Motor neuron (in vitro differentiated cells): ENCODE measurements at regions of chr1 and their contacts with region 1.

Region 1: GRCh38 chr1:231357831-231358354 is 19.8 kb downstream of the SPRTN start:
- ATAC-seq: peak; percentile 68 to 90 (median 76)
- H3K4me3 ChIP-seq: no peak overlapping the region
- H3K27ac ChIP-seq: no peak overlapping the region
- H3K4me1 ChIP-seq: no peaks in the 10 kb centered on the region

Region 2: DNA sequence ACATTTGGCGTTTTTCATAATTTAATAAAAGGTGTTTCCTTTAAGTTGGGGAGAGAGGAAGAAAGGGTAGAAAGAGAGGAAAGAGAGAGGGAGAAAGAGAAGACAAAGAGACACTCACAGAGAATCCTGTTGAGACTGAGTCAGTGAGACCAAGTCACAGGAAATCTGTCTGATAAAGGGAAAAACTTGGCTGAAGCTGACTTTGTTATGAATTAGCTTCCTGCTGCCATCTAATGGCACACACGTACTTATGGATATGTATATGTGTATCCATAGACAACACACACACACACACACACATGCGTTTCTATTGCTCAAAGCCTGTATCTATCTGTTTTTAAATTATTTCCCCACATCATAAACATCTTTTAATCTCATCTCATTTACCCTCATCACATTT is 226.2 kb after region 1 on chr1:
- in situ Hi-C with region 1: loop called in 6 of 9 experiments (anchors 5 to 25 kb)
- ATAC-seq: peak in 3 of 8 experiments; percentile 59 to 90 (median 66)
- H3K4me3 ChIP-seq: no peak overlapping the region
- H3K27ac ChIP-seq: no peak overlapping the region
- H3K4me1 ChIP-seq: peaks cover 5 to 11% of the 10 kb centered on the region in 2 donors

Region 3: GRCh38 chr1:231590453-231591198 is 232.7 kb after region 1 on chr1:
- in situ Hi-C with region 1: loop called in 6 of 9 experiments (anchors 5 to 25 kb)
- ATAC-seq: peak in 5 of 8 experiments; percentile 46 to 99 (median 99)
- H3K4me3 ChIP-seq: no peak overlapping the region
- H3K27ac ChIP-seq: no peak overlapping the region
- H3K4me1 ChIP-seq: no peaks in the 10 kb centered on the region

Region 4: DNA sequence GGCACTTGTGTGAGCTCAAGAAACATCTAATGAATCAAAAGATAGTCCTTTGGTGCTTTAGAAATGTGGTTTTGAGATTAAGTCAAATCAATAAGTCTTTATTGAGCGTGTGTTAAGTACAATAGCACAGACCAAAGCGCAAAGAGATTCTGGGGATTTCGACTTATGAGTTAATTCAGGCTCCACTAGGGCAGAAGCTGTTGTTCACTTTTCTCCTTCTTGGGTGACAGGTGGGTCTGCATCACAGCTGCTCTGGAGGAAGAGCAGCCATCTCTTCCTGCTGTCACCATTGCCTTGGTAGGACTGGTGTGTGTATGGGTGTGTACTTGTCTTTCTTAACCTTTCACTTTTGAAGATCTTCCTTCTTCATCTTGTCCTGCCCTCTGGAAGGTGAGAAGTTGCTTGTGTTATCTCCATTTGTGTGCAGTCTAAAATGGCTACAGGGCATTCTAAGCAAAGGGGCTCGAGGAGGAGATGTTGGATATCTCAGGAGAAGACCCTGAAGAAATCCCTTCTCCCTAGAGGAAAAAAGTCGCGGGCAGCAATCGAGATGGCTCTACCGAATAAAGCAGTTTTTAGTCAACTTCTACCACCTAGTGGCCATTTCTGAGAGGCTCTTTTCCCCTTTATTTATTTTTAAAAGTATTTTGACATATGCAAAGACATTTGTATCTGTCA is 245.8 kb after region 1 on chr1:
- in situ Hi-C with region 1: loop called in 6 of 9 experiments (anchors 10 to 25 kb)
- ATAC-seq: peak in 7 of 8 experiments; percentile 40 to 81 (median 58)
- H3K4me3 ChIP-seq: peak overlapping the region in 1 of 5 donors; percentile 6
- H3K27ac ChIP-seq: no peak overlapping the region
- H3K4me1 ChIP-seq: peaks cover 0 to 4% of the 10 kb centered on the region in 2 donors